Activated naive CD8-positive, alpha-beta T cell treated with anti-CD3 and anti-CD28 coated beads, Interleukin-2, amount 10 ng/mL, durations not matched to agents 7 days and 5 days (primary cell): ENCODE measurements at regions of chr3 and their contacts with region 1.

Region 1: DNA sequence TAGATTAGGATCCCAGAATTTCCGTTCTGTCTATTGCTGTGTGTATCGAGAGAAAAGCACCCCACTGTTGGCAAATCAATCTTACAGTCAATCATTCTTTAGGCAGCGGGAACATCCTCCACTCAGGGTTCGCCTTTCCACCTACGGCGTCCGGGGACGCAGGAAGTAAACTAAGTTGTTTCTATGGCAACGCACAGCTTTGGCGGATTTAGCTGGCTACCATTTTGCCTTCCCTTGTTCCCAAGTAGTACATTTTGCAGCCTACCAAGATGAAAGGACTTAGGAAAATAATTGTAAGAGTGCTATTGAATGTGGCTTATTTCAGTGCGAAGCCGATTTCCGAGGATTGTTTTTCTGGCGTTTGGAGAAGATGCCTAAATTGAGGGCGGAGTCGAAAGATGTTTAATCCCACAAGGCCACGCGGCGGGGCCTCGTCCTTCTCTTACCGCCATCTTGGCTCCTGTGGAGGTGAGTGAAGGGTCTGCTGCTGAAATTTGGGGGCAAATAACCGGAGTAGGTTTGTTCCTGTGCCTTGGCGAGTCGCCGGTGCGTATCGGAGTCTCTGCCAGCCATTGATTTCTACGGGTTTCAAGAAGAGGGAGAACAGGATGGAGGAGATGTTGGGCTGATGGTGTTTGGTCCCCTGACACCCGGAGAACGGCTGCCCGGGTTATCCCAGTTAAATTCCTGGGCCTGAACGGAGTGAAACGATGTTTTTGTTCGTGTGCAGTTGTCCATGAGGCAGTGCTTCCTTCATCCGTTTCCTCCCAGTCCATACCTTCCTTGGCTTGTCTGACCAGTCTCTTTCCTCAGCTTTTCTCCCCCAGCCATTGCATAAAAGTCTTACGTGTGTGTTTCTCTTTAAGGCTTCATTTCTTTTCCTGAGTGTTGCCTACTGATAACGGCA is at the start of gene RPL35A:
- DNase-seq: peak; percentile 80
- ATAC-seq: peak; percentile 85
- H3K4me3 Mint-ChIP-seq: peak within 1 kb of the TSS; percentile 95
- H3K27ac Mint-ChIP-seq: peak within 1 kb of the TSS; percentile 93
- H3K4me1 Mint-ChIP-seq: peaks cover 37% of the 10 kb centered on the region
- H3K27me3 Mint-ChIP-seq: no peaks in the 10 kb centered on the region
- total RNA-seq, gene RPL35A: 1,037 to 1,049 TPM

Region 2: DNA sequence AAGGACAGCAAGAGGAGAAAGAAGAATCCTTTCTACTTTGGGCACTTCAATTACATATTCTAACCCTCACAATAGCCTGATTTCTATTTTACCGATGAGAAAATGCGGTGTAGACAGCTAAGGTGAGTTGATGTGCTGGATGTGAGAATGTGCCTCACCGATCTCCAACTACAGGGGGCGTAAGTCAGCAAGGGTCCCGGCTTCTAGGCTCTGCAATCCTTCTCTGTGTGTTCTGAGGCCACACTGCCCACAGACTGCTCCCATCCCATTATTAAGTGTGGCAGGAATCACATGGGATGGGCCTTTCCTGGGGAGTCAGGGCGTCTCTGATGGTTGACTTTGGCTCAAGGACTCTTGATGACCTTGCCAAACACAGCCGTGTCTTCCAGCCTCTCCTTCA is 23.6 kb before region 1 on chr3:
- POLR2A ChIA-PET with region 1: no interaction called
- DNase-seq: no peak
- ATAC-seq: no peak
- H3K4me3 Mint-ChIP-seq: no peak overlapping the region
- H3K27ac Mint-ChIP-seq: no peak overlapping the region
- H3K4me1 Mint-ChIP-seq: no peaks in the 10 kb centered on the region
- H3K27me3 Mint-ChIP-seq: no peaks in the 10 kb centered on the region

Region 3: DNA sequence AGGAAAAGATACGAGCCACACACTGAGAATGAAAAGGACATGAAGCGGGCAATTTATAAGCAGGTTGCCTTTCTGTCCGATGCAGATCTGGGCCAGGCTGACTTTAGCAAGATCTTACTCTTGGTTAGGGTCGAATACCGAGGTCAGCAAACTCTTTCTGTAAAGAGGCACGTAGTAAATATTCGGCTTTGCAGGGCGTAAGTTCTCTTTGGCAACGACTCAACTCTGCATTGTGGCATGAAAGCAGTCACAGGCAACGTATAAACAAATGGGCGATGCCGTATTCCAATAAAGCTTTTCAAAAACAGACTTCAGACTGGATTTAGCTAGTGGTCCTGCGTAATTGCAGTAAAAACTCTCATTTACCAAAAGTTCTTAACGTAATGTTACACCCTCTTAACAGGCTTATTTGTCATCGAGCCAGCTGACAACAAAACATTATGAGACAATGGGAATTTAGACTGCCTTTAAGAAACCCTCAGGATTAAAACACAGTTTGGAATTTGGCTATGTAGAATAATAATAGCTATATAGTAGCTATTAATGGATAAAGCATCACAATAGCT is 13.1 kb before region 1 on chr3:
- POLR2A ChIA-PET with region 1: no interaction called
- DNase-seq: no peak
- ATAC-seq: no peak
- H3K4me3 Mint-ChIP-seq: no peak overlapping the region
- H3K27ac Mint-ChIP-seq: no peak overlapping the region
- H3K4me1 Mint-ChIP-seq: peaks cover 4% of the 10 kb centered on the region
- H3K27me3 Mint-ChIP-seq: no peaks in the 10 kb centered on the region

Region 4: GRCh38 chr3:197959898-197960693 is 10.1 kb after region 1 on chr3 and contains the start of gene LMLN:
- POLR2A ChIA-PET with region 1: interaction called, 27 read pairs
- DNase-seq: peak; percentile 97
- ATAC-seq: peak; percentile 91
- H3K4me3 Mint-ChIP-seq: peak within 1 kb of the TSS; percentile 93
- H3K27ac Mint-ChIP-seq: peak within 1 kb of the TSS; percentile 94
- H3K4me1 Mint-ChIP-seq: peaks cover 52% of the 10 kb centered on the region
- H3K27me3 Mint-ChIP-seq: no peaks in the 10 kb centered on the region
- total RNA-seq, gene LMLN: 7.9 to 8.2 TPM